ENCODE measurements at regions of chr3 and their contacts with region 1.

Region 1: DNA sequence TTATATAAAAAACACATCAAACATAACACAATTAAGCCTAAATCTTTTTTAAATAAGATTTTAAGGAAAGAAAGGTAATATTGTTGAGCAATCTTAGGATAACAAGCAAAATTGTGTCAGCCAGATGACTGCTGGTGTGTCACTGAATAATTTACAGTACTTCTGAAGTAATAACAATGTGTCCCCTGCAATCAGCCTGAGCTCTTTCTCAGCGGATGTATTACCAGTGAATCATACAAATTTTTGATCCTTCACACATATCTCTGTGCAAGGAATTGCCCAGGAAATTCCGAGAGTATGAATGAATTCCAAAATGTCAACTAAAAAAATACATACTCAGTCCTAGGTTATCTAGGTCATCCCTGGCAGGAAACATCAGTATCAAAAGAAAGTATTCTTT is 76.6 kb upstream of the PTX3 start:
- DNase-seq: peak; percentile 94
- H3K4me3 ChIP-seq: no peak overlapping the region
- H3K27ac ChIP-seq: peak overlapping the region; percentile 84
- H3K4me1 ChIP-seq: peaks cover 61% of the 10 kb centered on the region
- H3K27me3 ChIP-seq: no peaks in the 10 kb centered on the region
- CTCF ChIP-seq: no peak
- POLR2A ChIP-seq: peak; percentile 78

Region 2: DNA sequence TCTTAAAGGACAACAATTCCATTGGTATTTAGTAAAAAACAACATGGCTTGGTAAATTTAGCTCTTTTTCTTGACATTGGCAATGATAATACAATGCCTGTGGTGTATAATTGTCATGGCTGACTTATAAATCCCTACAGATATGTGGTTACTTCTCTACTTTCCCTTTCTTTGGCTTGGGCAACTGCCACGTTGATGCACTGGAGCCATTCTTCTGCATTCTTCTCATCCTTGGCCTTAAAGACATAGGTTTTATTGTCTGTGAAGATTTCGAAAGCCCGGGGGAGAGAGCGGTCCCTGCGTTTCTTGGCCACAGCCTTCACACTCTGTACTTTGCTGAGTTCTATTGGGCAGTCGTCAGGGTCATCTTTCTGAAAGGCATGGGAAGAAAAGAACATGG is 99.0 kb before region 1 on chr3:
- CTCF ChIA-PET with region 1: no interaction called
- POLR2A ChIA-PET with region 1: no interaction called
- dilution Hi-C with region 1: no loop called
- intact Hi-C with region 1: loop called (anchors 1 kb)
- DNase-seq: no peak
- H3K4me3 ChIP-seq: no peak overlapping the region
- H3K27ac ChIP-seq: no peak overlapping the region
- H3K4me1 ChIP-seq: peaks cover 17% of the 10 kb centered on the region
- H3K27me3 ChIP-seq: no peaks in the 10 kb centered on the region
- CTCF ChIP-seq: no peak
- POLR2A ChIP-seq: no peak

Region 3: GRCh38 chr3:157335198-157336076 is 24.6 kb before region 1 on chr3:
- CTCF ChIA-PET with region 1: interaction called, 5 read pairs
- POLR2A ChIA-PET with region 1: no interaction called
- dilution Hi-C with region 1: no loop called
- intact Hi-C with region 1: loop called (anchors 1 kb)
- DNase-seq: peak; percentile 98
- H3K4me3 ChIP-seq: no peak overlapping the region
- H3K27ac ChIP-seq: peak overlapping the region; percentile 84
- H3K4me1 ChIP-seq: peaks cover 43% of the 10 kb centered on the region
- H3K27me3 ChIP-seq: no peaks in the 10 kb centered on the region
- CTCF ChIP-seq: no peak
- POLR2A ChIP-seq: peak; percentile 67

Region 4: DNA sequence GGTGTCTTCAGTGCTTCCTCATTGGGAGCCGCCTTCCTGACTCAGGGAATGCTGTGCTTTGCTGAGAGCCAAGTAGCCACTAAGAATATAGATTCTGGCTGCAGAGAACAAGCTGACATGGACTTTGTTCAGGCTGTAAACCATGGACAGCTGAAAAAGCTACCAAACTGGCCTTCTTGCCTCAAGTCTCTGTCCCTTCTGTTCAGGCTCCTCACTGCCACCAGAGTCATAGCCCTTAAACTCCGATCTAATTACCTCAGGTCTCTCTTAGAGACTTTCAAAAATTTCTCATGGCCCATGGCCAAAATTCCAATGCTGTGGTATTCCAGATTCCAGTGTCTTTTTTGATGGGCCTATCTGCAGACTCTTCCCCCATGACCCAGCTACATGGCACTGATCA is 57.2 kb after region 1 on chr3:
- CTCF ChIA-PET with region 1: interaction called, 3 read pairs
- POLR2A ChIA-PET with region 1: no interaction called
- dilution Hi-C with region 1: no loop called
- intact Hi-C with region 1: loop called (anchors 1 kb)
- DNase-seq: peak; percentile 50
- H3K4me3 ChIP-seq: peak overlapping the region in 1 of 3 experiments; percentile 27
- H3K27ac ChIP-seq: peak overlapping the region; percentile 95
- H3K4me1 ChIP-seq: peaks cover 43% of the 10 kb centered on the region
- H3K27me3 ChIP-seq: no peaks in the 10 kb centered on the region
- CTCF ChIP-seq: no peak
- POLR2A ChIP-seq: no peak

Region 5: DNA sequence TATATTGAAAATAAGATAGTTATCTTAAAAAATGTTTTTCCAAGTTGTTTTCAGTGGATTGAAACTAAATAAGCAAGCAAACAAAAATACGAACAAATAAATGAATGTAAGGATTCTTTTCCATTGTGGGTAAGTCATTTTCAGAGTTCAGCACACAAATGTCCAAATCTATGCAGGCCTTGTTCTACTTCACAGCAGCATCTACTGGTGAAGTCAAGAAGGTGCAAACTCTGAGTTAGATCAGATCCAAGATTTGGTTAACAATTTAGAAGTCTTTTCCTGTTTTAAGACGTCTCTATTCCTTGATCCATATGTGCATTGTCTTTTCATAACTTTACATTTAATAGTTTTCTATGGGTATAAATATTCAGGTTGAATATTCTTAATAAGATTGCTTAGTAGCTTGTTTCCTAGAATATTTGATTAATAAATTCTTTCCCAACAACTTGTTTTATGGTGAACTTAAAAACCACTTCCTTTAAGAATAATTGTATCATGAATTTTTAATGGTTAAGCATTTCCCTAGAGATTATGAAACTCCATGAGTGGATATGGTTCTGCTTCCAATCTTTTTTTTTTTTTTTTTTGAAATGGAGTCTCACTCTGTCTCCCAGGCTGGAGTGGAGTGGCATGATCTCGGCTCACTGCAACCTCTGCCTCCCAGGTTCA is 87.1 kb after region 1 on chr3:
- CTCF ChIA-PET with region 1: interaction called, 14 read pairs
- POLR2A ChIA-PET with region 1: no interaction called
- dilution Hi-C with region 1: no loop called
- intact Hi-C with region 1: no loop called
- DNase-seq: peak; percentile 67
- H3K4me3 ChIP-seq: no peak overlapping the region
- H3K27ac ChIP-seq: no peak overlapping the region
- H3K4me1 ChIP-seq: peaks cover 34% of the 10 kb centered on the region
- H3K27me3 ChIP-seq: no peaks in the 10 kb centered on the region
- CTCF ChIP-seq: peak; percentile 47 to 54
- POLR2A ChIP-seq: no peak

Region 6: DNA sequence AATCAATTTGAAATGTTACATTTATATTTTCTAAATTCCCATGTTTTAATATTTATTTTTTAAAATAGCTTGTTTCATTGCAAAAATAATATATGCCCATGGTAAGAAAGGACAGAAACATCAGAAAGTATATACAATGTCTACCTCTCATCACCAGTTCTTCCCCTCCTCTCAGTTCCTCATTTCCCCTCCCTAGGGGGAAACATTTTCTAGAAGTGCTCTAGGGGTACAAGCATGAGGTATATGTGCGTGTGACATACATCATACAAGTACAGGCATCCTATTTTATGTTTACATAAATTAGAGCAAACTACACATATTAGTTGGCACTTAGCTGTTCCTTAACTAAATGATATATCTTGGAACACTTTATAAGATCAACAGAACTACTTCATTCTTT is 332.4 kb after region 1 on chr3:
- CTCF ChIA-PET with region 1: no interaction called
- POLR2A ChIA-PET with region 1: no interaction called
- dilution Hi-C with region 1: no loop called
- intact Hi-C with region 1: no loop called
- DNase-seq: no peak
- H3K4me3 ChIP-seq: no peak overlapping the region
- H3K27ac ChIP-seq: no peak overlapping the region
- H3K4me1 ChIP-seq: no peaks in the 10 kb centered on the region
- H3K27me3 ChIP-seq: no peaks in the 10 kb centered on the region
- CTCF ChIP-seq: no peak
- POLR2A ChIP-seq: no peak

Measured in endothelial cell of umbilical vein (primary cell).